Dorsolateral prefrontal cortex (tissue), 120 donors: ENCODE measurements at regions of chr9 and their contacts with region 1.

Region 1: GRCh38 chr9:127715394-127716337 is at the starts of genes PTRH1 and TTC16:
- DNase-seq: peak; percentile 95 to 99 (median 98)
- H3K4me3 ChIP-seq: peak within 1 kb of the TSS; percentile 61 to 100 (median 85)
- H3K27ac ChIP-seq: peak within 1 kb of the TSS in 52 of 59 donors; percentile 6 to 89 (median 69)
- H3K27me3 ChIP-seq: no peaks in the 10 kb centered on the region
- CTCF ChIP-seq: peak in 27 of 56 donors; percentile 3 to 53 (median 24)
- total RNA-seq, gene PTRH1: 4.2 to 19.6 (median 11.9) TPM
- total RNA-seq, gene TTC16: 0.15 to 1.4 (median 0.47) TPM in 110 of 120 experiments, not detected in the others

Region 2: GRCh38 chr9:127611899-127612790 is 103.5 kb before region 1 on chr9 and contains the start of gene STXBP1:
- intact Hi-C with region 1: loop called (anchors 5 to 10 kb)
- DNase-seq: peak; percentile 79 to 97 (median 90)
- H3K4me3 ChIP-seq: peak within 1 kb of the TSS; percentile 75 to 98 (median 93)
- H3K27ac ChIP-seq: peak within 1 kb of the TSS; percentile 68 to 98 (median 92)
- H3K27me3 ChIP-seq: no peaks in the 10 kb centered on the region
- CTCF ChIP-seq: peak in 13 of 56 donors; percentile 6 to 30 (median 17)
- total RNA-seq, gene STXBP1: 334 to 1,348 (median 969) TPM

Region 3: DNA sequence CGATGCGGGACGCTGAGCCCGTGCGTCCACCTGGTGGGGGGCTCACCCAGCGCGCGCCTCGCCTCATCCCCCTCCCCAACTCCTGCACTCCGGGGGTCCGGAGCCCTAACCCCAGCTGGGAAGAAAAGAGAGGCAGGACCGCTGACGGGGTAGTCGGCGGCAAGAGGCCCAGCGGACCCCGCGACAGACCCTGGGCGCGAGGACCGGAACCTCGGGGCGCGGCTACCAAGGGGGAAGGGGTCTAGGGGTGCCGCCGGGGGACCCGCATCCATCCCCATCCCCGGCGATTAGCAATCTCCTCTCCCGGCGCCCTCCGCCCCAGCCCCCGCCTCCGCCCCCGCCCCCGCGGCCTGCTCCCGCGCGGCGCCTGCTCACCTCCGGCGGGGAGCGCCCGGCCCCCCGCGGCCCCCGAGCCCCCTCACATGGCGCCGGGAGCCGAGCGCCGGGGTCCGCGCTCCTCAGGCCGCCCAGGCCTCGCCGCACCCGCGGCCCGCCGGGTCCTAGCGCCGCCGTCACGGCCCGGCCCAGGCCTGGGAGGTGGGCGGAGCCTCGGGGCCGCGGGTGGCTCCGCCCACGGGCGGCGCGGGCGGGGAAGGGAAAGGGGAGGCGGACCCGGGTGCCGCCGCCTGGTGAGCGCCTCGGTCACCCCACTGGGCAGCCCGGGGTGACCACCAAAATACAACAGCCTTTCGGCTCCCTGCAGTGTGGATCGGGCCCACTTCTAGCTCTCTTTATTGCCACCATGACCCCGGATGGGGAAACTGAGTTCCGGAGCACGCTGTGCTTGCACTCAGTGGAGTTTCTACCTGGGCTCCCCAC is 183.7 kb after region 1 on chr9 and contains the start of gene ST6GALNAC6:
- intact Hi-C with region 1: no loop called
- DNase-seq: peak in 7 of 10 donors; percentile 39 to 87 (median 71)
- H3K4me3 ChIP-seq: peak within 1 kb of the TSS; percentile 70 to 98 (median 92)
- H3K27ac ChIP-seq: peak within 1 kb of the TSS in 58 of 59 donors; percentile 8 to 95 (median 90)
- H3K27me3 ChIP-seq: no peaks in the 10 kb centered on the region
- CTCF ChIP-seq: peak in 25 of 56 donors; percentile 6 to 49 (median 23)
- total RNA-seq, gene ST6GALNAC6: 52.7 to 225 (median 137) TPM